A673 (cell line): ENCODE measurements at regions of chr14 and their contacts with region 1.

Region 1: GRCh38 chr14:64478634-64479250 is 13.4 kb downstream of the AKAP5 start:
- DNase-seq: peak; percentile 37
- H3K4me3 ChIP-seq: no peak overlapping the region
- H3K27ac ChIP-seq: no peak overlapping the region
- H3K4me1 ChIP-seq: peaks cover 4% of the 10 kb centered on the region
- H3K27me3 ChIP-seq: no peaks in the 10 kb centered on the region
- CTCF ChIP-seq: peak; percentile 62

Region 2: GRCh38 chr14:64338616-64339316 is 140.0 kb before region 1 on chr14:
- CTCF ChIA-PET with region 1: interaction called, 3 read pairs
- POLR2A ChIA-PET with region 1: no interaction called
- intact Hi-C with region 1: loop called (anchors 5 kb)
- DNase-seq: peak; percentile 99
- H3K4me3 ChIP-seq: peak overlapping the region; percentile 79
- H3K27ac ChIP-seq: peak overlapping the region; percentile 94
- H3K4me1 ChIP-seq: peaks cover 10% of the 10 kb centered on the region
- H3K27me3 ChIP-seq: no peaks in the 10 kb centered on the region
- CTCF ChIP-seq: no peak

Region 3: DNA sequence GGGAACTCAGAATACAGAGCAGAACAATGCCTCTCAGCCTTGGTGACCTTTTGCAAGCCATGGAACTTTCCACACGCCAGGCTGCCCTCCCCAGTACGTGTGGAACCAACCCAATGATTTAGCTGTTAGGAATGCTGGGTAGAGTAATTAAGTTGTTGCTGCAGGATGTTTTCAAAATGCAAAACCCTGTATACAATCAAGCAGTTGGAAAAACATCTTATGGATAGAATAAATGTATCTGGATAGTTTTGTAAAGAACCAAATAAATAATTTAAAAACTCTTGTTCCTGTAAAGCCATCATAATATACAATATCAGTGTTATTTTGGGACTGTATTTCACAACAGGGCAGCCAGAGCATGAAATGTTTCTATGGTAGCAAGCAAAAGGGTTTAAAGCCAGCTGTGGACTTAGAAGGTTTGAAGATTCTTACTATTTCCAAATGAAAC is 90.5 kb after region 1 on chr14:
- CTCF ChIA-PET with region 1: no interaction called
- POLR2A ChIA-PET with region 1: no interaction called
- intact Hi-C with region 1: no loop called
- DNase-seq: no peak
- H3K4me3 ChIP-seq: no peak overlapping the region
- H3K27ac ChIP-seq: no peak overlapping the region
- H3K4me1 ChIP-seq: peaks cover 9% of the 10 kb centered on the region
- H3K27me3 ChIP-seq: no peaks in the 10 kb centered on the region
- CTCF ChIP-seq: no peak